Mammary epithelial cell (primary cell): ENCODE measurements at regions of chr9 and their contacts with region 1.

Region 1: GRCh38 chr9:130921300-130921988 is 17.6 kb downstream of the FIBCD1 start:
- DNase-seq: no peak
- H3K4me3 ChIP-seq: no peak overlapping the region
- H3K27ac ChIP-seq: no peak overlapping the region
- H3K4me1 ChIP-seq: no peaks in the 10 kb centered on the region
- H3K27me3 ChIP-seq: peaks cover 22% of the 10 kb centered on the region
- CTCF ChIP-seq: no peak

Region 2: GRCh38 chr9:130327070-130327780 is 594.2 kb before region 1 on chr9:
- CTCF ChIA-PET with region 1: no interaction called
- dilution Hi-C with region 1: no loop called
- in situ Hi-C with region 1: no loop called
- intact Hi-C with region 1: no loop called
- DNase-seq: no peak
- H3K4me3 ChIP-seq: no peak overlapping the region
- H3K27ac ChIP-seq: no peak overlapping the region
- H3K4me1 ChIP-seq: peaks cover 12% of the 10 kb centered on the region
- H3K27me3 ChIP-seq: peaks cover 4% of the 10 kb centered on the region
- CTCF ChIP-seq: peak in 1 of 2 donors; percentile 8

Region 3: DNA sequence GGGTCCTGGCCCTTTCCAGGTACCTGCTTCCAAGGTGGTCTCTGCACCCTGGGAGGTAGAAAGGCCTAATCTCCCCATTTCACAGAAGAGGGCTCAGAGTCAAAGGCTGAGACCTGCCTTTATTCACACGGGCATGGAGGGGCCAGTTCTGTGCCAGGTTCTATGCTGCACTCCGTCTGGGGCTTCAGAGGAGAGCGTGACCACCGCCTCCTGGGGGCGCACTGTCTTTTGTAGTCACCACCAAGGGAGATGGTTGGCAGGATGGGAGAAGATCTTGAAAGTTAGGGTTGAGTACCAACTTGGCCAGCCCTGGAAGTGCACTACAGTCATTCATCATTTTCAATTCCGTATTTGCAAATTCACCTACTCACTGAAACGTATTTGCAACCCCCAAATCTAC is 280.8 kb before region 1 on chr9:
- CTCF ChIA-PET with region 1: no interaction called
- dilution Hi-C with region 1: no loop called
- in situ Hi-C with region 1: no loop called
- intact Hi-C with region 1: no loop called
- DNase-seq: no peak
- H3K4me3 ChIP-seq: no peak overlapping the region
- H3K27ac ChIP-seq: no peak overlapping the region
- H3K4me1 ChIP-seq: no peaks in the 10 kb centered on the region
- H3K27me3 ChIP-seq: no peaks in the 10 kb centered on the region
- CTCF ChIP-seq: no peak

Region 4: DNA sequence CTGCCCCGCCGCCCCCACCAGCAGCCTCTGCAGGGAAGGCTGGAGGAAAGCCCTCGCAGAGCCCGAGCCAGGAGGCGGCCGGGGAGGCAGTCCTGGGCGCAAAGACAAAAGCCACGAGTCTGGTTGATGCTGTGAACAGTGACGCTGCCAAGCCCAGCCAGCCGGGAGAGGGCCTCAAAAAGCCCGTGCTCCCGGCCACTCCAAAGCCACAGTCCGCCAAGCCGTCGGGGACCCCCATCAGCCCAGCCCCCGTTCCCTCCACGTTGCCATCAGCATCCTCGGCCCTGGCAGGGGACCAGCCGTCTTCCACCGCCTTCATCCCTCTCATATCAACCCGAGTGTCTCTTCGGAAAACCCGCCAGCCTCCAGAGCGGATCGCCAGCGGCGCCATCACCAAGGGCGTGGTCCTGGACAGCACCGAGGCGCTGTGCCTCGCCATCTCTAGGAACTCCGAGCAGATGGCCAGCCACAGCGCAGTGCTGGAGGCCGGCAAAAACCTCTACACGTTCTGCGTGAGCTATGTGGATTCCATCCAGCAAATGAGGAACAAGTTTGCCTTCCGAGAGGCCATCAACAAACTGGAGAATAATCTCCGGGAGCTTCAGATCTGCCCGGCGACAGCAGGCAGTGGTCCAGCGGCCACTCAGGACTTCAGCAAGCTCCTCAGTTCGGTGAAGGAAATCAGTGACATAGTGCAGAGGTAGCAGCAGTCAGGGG is 36.3 kb before region 1 on chr9:
- CTCF ChIA-PET with region 1: no interaction called
- dilution Hi-C with region 1: loop called (anchors 5 kb)
- in situ Hi-C with region 1: no loop called
- intact Hi-C with region 1: no loop called
- DNase-seq: no peak
- H3K4me3 ChIP-seq: no peak overlapping the region
- H3K27ac ChIP-seq: peak overlapping the region; percentile 25
- H3K4me1 ChIP-seq: peaks cover 17% of the 10 kb centered on the region
- H3K27me3 ChIP-seq: no peaks in the 10 kb centered on the region
- CTCF ChIP-seq: no peak